Common myeloid progenitor, CD34-positive (primary cell): ENCODE measurements at regions of chr11 and their contacts with region 1.

Region 1: GRCh38 chr11:124875943-124876817 is 10.9 kb downstream of the ROBO3 start:
- DNase-seq: peak; percentile 95 to 98 (median 98)
- H3K4me3 ChIP-seq: peak overlapping the region; percentile 40 to 89 (median 72)
- H3K27ac ChIP-seq: peak overlapping the region in 1 of 2 experiments; percentile 75
- H3K4me1 ChIP-seq: peaks cover 0 to 53% (median 42%) of the 10 kb centered on the region in 4 experiments
- H3K27me3 ChIP-seq: peaks cover 0 to 44% (median 28%) of the 10 kb centered on the region in 5 experiments

Region 2: DNA sequence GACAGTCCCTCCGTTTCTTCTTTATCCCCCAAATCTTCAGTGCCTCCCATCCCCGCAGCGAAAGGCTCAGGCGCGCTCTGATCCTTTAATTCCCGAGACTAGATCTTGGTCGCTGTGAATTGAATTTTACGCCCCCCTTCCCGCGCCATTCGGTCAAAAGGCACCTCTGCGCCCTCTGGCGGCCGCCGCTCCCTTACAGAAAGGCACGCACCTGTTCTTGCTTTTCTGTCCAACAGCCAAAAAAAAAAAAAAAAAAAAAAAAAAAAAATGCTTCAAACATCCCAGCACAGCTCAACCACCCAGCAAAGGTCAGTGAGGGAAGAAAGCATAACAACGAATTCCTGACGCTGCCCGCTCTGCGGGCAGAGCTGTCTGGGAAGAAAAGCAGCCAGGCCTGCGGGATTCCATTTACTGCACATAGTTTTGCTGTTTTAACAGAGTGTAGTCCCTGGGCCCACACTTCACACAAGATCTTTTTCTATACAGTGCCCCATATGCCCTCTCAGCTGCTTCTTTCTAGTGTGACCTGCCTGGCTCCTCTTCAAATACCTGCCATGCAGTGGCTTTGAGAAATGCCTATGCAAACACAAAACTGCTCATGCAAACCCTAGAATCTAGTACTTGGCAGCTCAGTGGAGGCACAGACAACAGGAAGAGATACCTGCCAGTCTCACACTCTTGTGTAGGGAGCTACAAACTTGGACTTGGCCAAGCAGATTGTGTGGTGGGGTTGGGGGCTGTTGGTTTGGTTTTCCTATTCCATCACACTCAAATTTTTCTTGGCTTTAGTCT is 112.8 kb before region 1 on chr11:
- CTCF ChIA-PET with region 1: no interaction called
- POLR2A ChIA-PET with region 1: no interaction called
- DNase-seq: peak; percentile 84 to 88 (median 86)
- H3K4me3 ChIP-seq: peak overlapping the region; percentile 32 to 87 (median 70)
- H3K27ac ChIP-seq: no peak overlapping the region
- H3K4me1 ChIP-seq: peaks cover 1 to 50% (median 48%) of the 10 kb centered on the region in 4 experiments
- H3K27me3 ChIP-seq: no peaks in the 10 kb centered on the region

Region 3: DNA sequence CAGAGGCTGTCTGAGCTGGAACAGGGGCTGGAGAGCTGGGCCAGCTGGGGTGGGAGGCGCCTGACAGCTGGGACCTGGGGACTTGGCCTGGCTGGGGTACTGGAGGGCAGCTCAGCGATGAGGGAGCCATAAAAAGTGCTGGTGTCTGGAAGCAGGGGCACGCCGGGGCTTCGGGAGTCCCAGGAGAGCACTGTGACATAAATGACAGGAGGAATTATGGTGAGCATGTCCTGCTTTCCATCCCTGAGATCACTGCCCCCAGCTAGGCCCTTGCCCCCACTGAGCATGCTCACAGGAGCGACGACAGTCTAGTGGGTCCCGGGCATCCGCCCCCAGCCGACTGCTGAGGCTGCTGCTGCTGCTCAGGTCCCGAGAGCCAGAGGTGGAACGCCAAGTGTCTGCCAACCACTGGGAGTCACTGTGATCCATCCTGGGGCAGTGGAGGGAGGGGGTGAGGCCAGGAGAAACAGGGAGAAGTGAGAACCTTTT is 15.2 kb after region 1 on chr11:
- CTCF ChIA-PET with region 1: interaction called, 39 read pairs
- POLR2A ChIA-PET with region 1: interaction called, 5 read pairs
- DNase-seq: no peak
- H3K4me3 ChIP-seq: no peak overlapping the region
- H3K27ac ChIP-seq: no peak overlapping the region
- H3K4me1 ChIP-seq: peaks cover 2 to 35% (median 16%) of the 10 kb centered on the region in 4 experiments
- H3K27me3 ChIP-seq: no peaks in the 10 kb centered on the region

Region 4: GRCh38 chr11:125020342-125020741 is 144.2 kb after region 1 on chr11:
- CTCF ChIA-PET with region 1: no interaction called
- POLR2A ChIA-PET with region 1: no interaction called
- DNase-seq: no peak
- H3K4me3 ChIP-seq: no peak overlapping the region
- H3K27ac ChIP-seq: no peak overlapping the region
- H3K4me1 ChIP-seq: no peaks in the 10 kb centered on the region
- H3K27me3 ChIP-seq: no peaks in the 10 kb centered on the region

Region 5: GRCh38 chr11:125123947-125124617 is 247.9 kb after region 1 on chr11:
- CTCF ChIA-PET with region 1: no interaction called
- POLR2A ChIA-PET with region 1: no interaction called
- DNase-seq: peak in 2 of 3 donors; percentile 48 to 50
- H3K4me3 ChIP-seq: peak overlapping the region in 2 of 7 experiments; percentile 23 to 50
- H3K27ac ChIP-seq: no peak overlapping the region
- H3K4me1 ChIP-seq: peaks cover 0 to 14% (median 6%) of the 10 kb centered on the region in 4 experiments
- H3K27me3 ChIP-seq: peaks cover 0 to 29% (median 20%) of the 10 kb centered on the region in 5 experiments

Region 6: DNA sequence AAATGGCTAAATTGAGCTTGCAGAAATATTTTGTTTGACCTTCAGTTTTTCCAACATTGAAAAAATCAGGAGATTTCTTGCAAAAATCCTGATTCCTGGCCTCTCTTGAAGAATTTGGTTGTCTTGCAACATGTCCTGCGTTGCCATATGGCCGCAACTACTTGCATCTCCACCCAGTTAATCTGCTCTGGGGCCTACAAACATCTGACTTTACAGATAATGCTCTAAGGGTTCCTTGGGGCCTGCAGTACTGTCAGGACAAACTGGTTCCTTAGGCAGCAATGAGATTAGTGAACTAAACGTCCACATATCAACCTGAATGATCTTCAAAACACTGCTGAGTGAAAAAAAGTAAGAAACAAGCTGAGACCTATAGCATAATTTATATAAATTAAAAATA is 656.5 kb after region 1 on chr11:
- CTCF ChIA-PET with region 1: no interaction called
- POLR2A ChIA-PET with region 1: no interaction called
- DNase-seq: peak in 1 of 3 donors; percentile 7
- H3K4me3 ChIP-seq: no peak overlapping the region
- H3K27ac ChIP-seq: no peak overlapping the region
- H3K4me1 ChIP-seq: no peaks in the 10 kb centered on the region
- H3K27me3 ChIP-seq: peaks cover 0 to 2% (median 0%) of the 10 kb centered on the region in 5 experiments